Activated CD4-positive, alpha-beta memory T cell treated with anti-CD3 and anti-CD28 coated beads for 36 hours (primary cell): ENCODE measurements at regions of chr2 and their contacts with region 1.

Region 1: GRCh38 chr2:136384531-136385303 is 266.8 kb upstream of the CXCR4 start:
- DNase-seq: peak; percentile 60
- H3K4me3 Mint-ChIP-seq: no peak overlapping the region
- H3K27ac Mint-ChIP-seq: peak overlapping the region; percentile 96
- H3K4me1 Mint-ChIP-seq: peaks cover 45% of the 10 kb centered on the region
- H3K27me3 Mint-ChIP-seq: no peaks in the 10 kb centered on the region

Region 2: GRCh38 chr2:135052042-135052876 is 1332.5 kb before region 1 on chr2 and contains the start of gene RAB3GAP1:
- CTCF ChIA-PET with region 1: no interaction called
- POLR2A ChIA-PET with region 1: no interaction called
- intact Hi-C with region 1: loop called (anchors 2 kb)
- DNase-seq: peak; percentile 97
- H3K4me3 Mint-ChIP-seq: peak within 1 kb of the TSS; percentile 98
- H3K27ac Mint-ChIP-seq: peak within 1 kb of the TSS; percentile 100
- H3K4me1 Mint-ChIP-seq: peaks cover 39% of the 10 kb centered on the region
- H3K27me3 Mint-ChIP-seq: no peaks in the 10 kb centered on the region
- total RNA-seq, gene RAB3GAP1: 29.6 to 30.7 TPM

Region 3: GRCh38 chr2:135820003-135820618 is 564.6 kb before region 1 on chr2:
- CTCF ChIA-PET with region 1: interaction called, 7 read pairs
- POLR2A ChIA-PET with region 1: no interaction called
- intact Hi-C with region 1: loop called (anchors 1 kb)
- DNase-seq: peak; percentile 94
- H3K4me3 Mint-ChIP-seq: peak overlapping the region; percentile 61
- H3K27ac Mint-ChIP-seq: peak overlapping the region; percentile 78
- H3K4me1 Mint-ChIP-seq: peaks cover 38% of the 10 kb centered on the region
- H3K27me3 Mint-ChIP-seq: no peaks in the 10 kb centered on the region

Region 4: DNA sequence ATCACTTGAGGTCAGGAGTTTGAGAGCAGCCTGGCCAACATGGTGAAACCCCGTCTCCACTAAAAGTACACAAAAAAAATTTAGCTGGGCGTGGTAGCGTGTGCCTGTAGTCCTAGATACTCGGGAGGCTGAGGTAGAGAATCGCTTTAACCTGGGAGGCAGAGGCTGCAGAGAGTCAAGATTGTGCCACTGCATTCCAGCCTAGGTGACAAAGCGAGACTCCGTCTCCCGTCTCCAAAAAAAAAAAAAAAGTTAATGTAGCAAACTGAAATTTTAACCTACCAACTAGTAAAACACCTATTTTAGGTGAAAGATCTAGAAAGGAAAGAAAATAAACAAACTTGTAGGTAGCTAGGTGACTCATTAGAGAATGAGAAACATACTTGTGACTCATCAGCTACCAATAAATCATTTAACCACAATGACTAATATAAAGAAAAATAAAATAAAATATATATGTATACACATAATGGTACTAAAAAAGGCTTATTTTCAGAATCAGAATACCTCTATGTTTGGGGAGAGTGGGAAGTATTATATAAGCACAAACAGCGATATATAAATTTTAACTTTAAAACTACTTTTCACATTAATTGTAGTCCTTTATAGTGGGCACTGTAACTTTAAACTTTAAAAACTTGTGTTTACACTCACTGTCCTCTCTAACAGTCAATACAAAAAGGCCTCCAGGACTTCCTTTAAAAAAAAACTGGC is 435.9 kb before region 1 on chr2:
- CTCF ChIA-PET with region 1: interaction called, 5 read pairs
- POLR2A ChIA-PET with region 1: interaction called, 5 read pairs
- intact Hi-C with region 1: loop called (anchors 1 kb)
- DNase-seq: peak; percentile 55
- H3K4me3 Mint-ChIP-seq: peak overlapping the region; percentile 53
- H3K27ac Mint-ChIP-seq: peak overlapping the region; percentile 87
- H3K4me1 Mint-ChIP-seq: peaks cover 64% of the 10 kb centered on the region
- H3K27me3 Mint-ChIP-seq: no peaks in the 10 kb centered on the region

Region 5: GRCh38 chr2:136059036-136059472 is 325.7 kb before region 1 on chr2:
- CTCF ChIA-PET with region 1: interaction called, 17 read pairs
- POLR2A ChIA-PET with region 1: interaction called, 12 read pairs
- intact Hi-C with region 1: loop called (anchors 1 kb)
- DNase-seq: no peak
- H3K4me3 Mint-ChIP-seq: no peak overlapping the region
- H3K27ac Mint-ChIP-seq: no peak overlapping the region
- H3K4me1 Mint-ChIP-seq: peaks cover 63% of the 10 kb centered on the region
- H3K27me3 Mint-ChIP-seq: no peaks in the 10 kb centered on the region

Region 6: GRCh38 chr2:136212423-136213378 is 172.0 kb before region 1 on chr2:
- CTCF ChIA-PET with region 1: interaction called, 3 read pairs
- POLR2A ChIA-PET with region 1: no interaction called
- intact Hi-C with region 1: loop called (anchors 1 kb)
- DNase-seq: peak; percentile 61
- H3K4me3 Mint-ChIP-seq: no peak overlapping the region
- H3K27ac Mint-ChIP-seq: peak overlapping the region; percentile 59
- H3K4me1 Mint-ChIP-seq: peaks cover 46% of the 10 kb centered on the region
- H3K27me3 Mint-ChIP-seq: no peaks in the 10 kb centered on the region

Region 7: DNA sequence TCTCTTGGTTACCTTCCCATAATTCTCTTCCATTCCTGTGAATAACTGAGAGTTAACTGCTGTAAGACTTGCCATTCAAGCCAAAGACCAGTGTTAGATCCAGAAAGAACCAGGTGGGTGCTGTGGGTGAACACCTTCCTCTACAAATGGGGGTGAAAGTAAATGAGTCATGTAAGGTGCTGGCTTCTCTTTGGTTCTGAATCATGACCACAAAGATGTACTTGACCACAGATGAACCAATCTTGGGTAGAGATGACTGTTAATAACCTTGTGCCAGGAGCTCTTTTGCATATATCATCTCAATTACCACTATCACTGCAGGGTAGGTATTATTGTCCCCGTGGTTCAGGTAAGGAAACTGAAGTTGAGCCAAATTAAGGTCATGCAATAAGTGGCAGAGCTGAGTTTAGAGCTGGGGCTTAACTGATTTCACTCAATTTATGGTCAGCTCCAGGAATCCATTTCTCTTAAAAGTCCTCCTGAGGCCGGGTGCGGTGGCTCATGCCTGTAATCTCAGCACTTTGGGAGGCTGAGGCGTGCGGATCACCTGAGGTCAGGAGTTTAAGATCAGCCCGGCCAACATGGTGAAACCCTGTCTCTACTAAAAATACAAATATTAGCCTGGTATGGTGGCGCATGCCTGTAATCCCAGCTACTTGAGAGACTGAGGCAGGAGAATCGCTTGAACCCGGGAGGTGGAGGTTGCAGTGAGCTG is 21.9 kb before region 1 on chr2:
- CTCF ChIA-PET with region 1: interaction called, 6 read pairs
- POLR2A ChIA-PET with region 1: interaction called, 10 read pairs
- intact Hi-C with region 1: loop called (anchors 1 kb)
- DNase-seq: peak; percentile 67
- H3K4me3 Mint-ChIP-seq: peak overlapping the region; percentile 25
- H3K27ac Mint-ChIP-seq: peak overlapping the region; percentile 53
- H3K4me1 Mint-ChIP-seq: peaks cover 56% of the 10 kb centered on the region
- H3K27me3 Mint-ChIP-seq: peaks cover 5% of the 10 kb centered on the region